ENCODE measurements at regions of chr5 and their contacts with region 1.

Region 1: GRCh38 chr5:132007399-132008165 is 3.9 kb downstream of the ACSL6 start:
- DNase-seq: peak; percentile 46
- ATAC-seq: peak; percentile 64
- H3K4me3 Mint-ChIP-seq: no peak overlapping the region
- H3K27ac Mint-ChIP-seq: no peak overlapping the region
- H3K4me1 Mint-ChIP-seq: peaks cover 10% of the 10 kb centered on the region
- H3K27me3 Mint-ChIP-seq: peaks cover 35% of the 10 kb centered on the region
- CTCF ChIP-seq: peak; percentile 73

Region 2: DNA sequence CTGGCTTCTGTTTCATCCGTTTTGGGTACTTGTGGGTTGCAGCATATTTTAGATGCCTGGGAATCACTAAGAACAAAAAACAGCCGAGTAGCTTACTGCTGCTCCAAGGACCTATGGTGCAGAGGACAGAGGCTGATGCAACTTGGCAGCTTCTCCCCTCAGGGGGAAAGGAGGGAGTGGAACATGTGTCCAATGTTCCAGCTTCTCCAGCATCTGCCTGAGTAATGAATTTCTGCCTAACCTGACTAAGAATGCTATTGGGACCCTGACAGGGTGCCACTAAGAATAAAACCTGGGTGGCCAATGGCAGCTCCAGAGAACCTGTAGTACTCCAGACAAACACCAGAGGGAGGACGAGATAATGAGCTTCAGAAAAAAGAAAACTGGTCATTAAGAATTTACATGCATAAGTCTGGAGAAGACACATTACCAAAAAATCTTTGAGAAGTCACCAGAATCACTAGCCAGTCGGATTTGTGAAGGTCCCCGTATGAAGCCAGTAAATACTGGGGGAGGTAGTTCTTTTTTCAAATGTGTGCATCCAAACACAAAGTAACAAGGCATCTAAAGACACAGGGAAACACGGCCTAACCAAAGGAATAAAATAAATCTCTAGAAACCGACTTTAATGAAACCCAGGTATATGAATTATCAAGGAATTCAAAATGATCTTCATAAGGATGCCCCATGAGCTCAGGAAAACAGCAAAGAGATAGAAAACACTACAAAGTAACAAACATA is 1136.1 kb before region 1 on chr5:
- CTCF ChIA-PET with region 1: no interaction called
- POLR2A ChIA-PET with region 1: no interaction called
- intact Hi-C with region 1: loop called (anchors 10 kb)
- DNase-seq: no peak
- ATAC-seq: peak; percentile 56
- H3K4me3 Mint-ChIP-seq: no peak overlapping the region
- H3K27ac Mint-ChIP-seq: no peak overlapping the region
- H3K4me1 Mint-ChIP-seq: no peaks in the 10 kb centered on the region
- H3K27me3 Mint-ChIP-seq: peaks cover under 1% of the 10 kb centered on the region
- CTCF ChIP-seq: no peak

Region 3: GRCh38 chr5:131423056-131423455 is 584.5 kb before region 1 on chr5:
- CTCF ChIA-PET with region 1: interaction called, 12 read pairs
- POLR2A ChIA-PET with region 1: no interaction called
- intact Hi-C with region 1: no loop called
- DNase-seq: no peak
- ATAC-seq: no peak
- H3K4me3 Mint-ChIP-seq: no peak overlapping the region
- H3K27ac Mint-ChIP-seq: no peak overlapping the region
- H3K4me1 Mint-ChIP-seq: no peaks in the 10 kb centered on the region
- H3K27me3 Mint-ChIP-seq: no peaks in the 10 kb centered on the region
- CTCF ChIP-seq: no peak

Region 4: DNA sequence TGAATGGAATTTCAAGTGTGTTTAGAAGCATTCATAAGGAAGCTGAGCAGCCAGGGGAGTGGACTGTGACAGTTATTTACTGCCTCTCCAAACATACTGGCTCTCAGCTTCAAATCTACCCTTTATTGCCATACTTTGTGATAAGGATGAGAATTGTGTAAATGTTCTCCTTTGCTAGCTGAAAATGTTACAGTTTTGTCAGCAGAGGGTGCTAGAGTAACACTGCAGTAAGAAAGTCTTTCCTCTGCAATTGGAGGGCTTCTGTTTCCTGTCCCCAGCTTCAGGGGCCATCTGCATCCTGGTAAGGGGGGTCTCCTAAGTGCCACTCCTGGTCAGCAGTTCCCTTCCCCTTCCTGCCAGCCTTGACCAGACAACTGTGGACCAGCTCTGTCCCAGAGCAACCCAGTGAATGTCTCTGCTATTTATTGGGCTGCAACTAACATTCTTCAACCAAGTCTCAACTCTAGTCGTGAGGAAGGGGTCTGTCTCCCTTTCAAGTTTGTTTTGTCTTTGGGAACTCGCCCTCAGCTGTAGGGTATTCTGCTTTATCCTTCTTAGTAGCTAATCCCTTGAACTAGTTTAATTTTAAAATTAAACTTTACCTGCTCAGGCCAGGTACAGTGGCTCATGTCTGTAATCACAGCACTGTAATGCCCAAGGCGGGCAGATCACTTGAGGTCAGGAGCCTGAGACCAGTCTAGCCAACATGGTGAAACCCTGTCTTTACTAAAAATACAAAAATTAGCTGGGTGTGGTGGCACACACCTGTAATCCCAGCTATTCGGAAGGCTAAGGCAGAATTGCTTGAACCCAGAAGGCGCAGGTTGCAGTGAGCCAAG is 417.9 kb before region 1 on chr5:
- CTCF ChIA-PET with region 1: interaction called, 279 read pairs
- POLR2A ChIA-PET with region 1: interaction called, 3 read pairs
- intact Hi-C with region 1: loop called (anchors 1 kb)
- DNase-seq: no peak
- ATAC-seq: peak; percentile 57
- H3K4me3 Mint-ChIP-seq: no peak overlapping the region
- H3K27ac Mint-ChIP-seq: no peak overlapping the region
- H3K4me1 Mint-ChIP-seq: peaks cover 25% of the 10 kb centered on the region
- H3K27me3 Mint-ChIP-seq: no peaks in the 10 kb centered on the region
- CTCF ChIP-seq: peak; percentile 48

Region 5: GRCh38 chr5:131671994-131672655 is 335.5 kb before region 1 on chr5:
- CTCF ChIA-PET with region 1: interaction called, 3 read pairs
- POLR2A ChIA-PET with region 1: no interaction called
- intact Hi-C with region 1: loop called (anchors 5 kb)
- DNase-seq: no peak
- ATAC-seq: no peak
- H3K4me3 Mint-ChIP-seq: no peak overlapping the region
- H3K27ac Mint-ChIP-seq: no peak overlapping the region
- H3K4me1 Mint-ChIP-seq: peaks cover 30% of the 10 kb centered on the region
- H3K27me3 Mint-ChIP-seq: no peaks in the 10 kb centered on the region
- CTCF ChIP-seq: no peak

Region 6: GRCh38 chr5:131810510-131811249 is 196.9 kb before region 1 on chr5:
- CTCF ChIA-PET with region 1: interaction called, 9 read pairs
- POLR2A ChIA-PET with region 1: no interaction called
- intact Hi-C with region 1: loop called (anchors 1 kb)
- DNase-seq: no peak
- ATAC-seq: peak; percentile 28
- H3K4me3 Mint-ChIP-seq: no peak overlapping the region
- H3K27ac Mint-ChIP-seq: no peak overlapping the region
- H3K4me1 Mint-ChIP-seq: peaks cover 6% of the 10 kb centered on the region
- H3K27me3 Mint-ChIP-seq: peaks cover 4% of the 10 kb centered on the region
- CTCF ChIP-seq: no peak

Region 7: DNA sequence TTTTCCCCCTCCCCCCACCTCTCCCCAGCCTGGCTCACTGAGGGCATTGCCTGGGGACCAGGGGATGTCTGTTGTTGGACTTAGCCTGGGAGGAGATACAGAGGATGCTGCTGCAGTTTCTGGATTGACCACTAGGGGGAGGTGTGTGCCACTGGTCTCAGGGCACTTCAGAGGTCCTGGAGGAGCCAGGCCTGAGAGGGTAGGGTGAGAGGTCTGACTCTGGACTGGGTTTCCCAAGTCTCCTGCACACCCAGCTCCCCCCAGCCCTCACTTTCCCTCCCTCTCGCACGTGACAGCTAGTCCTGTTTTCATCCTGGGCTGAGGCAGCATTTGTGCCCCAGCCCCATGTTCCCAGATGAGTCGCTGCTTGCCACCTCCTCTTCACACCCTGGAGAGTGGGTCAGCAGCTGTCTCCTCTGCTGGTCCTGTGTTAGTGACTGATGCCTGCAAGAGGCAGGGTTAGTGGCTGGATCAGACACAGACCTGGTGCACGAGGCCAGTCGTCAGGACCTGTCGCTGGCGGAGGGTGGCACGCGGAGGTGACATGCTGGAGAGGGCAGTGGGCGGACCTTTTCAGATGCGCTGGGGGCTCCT is 57.3 kb after region 1 on chr5:
- CTCF ChIA-PET with region 1: interaction called, 8 read pairs
- POLR2A ChIA-PET with region 1: no interaction called
- intact Hi-C with region 1: loop called (anchors 2 kb)
- DNase-seq: peak; percentile 64
- ATAC-seq: peak; percentile 86
- H3K4me3 Mint-ChIP-seq: no peak overlapping the region
- H3K27ac Mint-ChIP-seq: no peak overlapping the region
- H3K4me1 Mint-ChIP-seq: peaks cover 8% of the 10 kb centered on the region
- H3K27me3 Mint-ChIP-seq: no peaks in the 10 kb centered on the region
- CTCF ChIP-seq: peak; percentile 35